Heart right ventricle (tissue), 16 donors: ENCODE measurements at regions of chr14 and their contacts with region 1.

Region 1: GRCh38 chr14:37197421-37198272 is at the start of gene MIPOL1:
- DNase-seq: peak; percentile 83 to 88
- ATAC-seq: peak; percentile 99 to 100 (median 99)
- H3K4me3 ChIP-seq: peak within 1 kb of the TSS; percentile 41 to 80 (median 64)
- H3K27ac ChIP-seq: peak within 1 kb of the TSS; percentile 31 to 91 (median 84)
- H3K4me1 ChIP-seq: peaks cover 0 to 15% (median 7%) of the 10 kb centered on the region in 9 donors
- H3K27me3 ChIP-seq: peaks cover 0 to 4% (median 0%) of the 10 kb centered on the region in 7 donors
- CTCF ChIP-seq: peak in 7 of 9 donors; percentile 8 to 60 (median 35)
- total RNA-seq, gene MIPOL1: 4.2 to 9.2 (median 5.6) TPM

Region 2: DNA sequence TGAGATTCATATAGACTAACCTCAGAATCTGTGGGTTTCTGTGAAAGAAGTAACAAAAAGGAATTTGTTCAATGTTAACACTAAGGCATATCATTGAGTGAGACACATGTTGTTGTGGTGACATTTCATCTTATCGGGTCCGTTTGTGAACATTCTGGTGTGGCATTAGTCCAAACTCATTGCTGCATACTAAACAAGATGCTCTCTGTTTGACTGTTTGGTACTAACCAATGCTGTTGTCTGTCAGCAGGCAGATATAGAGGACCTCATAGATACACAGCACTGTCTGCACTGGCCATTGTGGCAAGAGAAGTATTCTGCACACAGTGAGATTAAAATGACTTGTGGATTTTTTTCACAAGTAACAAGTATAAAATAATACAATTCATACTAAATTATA is 66.4 kb before region 1 on chr14:
- intact Hi-C with region 1: loop called in 1 of 10 experiments (anchors 2 kb)
- DNase-seq: no peak
- ATAC-seq: peak in 1 of 8 donors; percentile 31
- H3K4me3 ChIP-seq: no peak overlapping the region
- H3K27ac ChIP-seq: no peak overlapping the region
- H3K4me1 ChIP-seq: no peaks in the 10 kb centered on the region
- H3K27me3 ChIP-seq: no peaks in the 10 kb centered on the region
- CTCF ChIP-seq: no peak

Region 3: GRCh38 chr14:37172024-37172869 is 25.4 kb before region 1 on chr14 and contains the start of gene SLC25A21:
- intact Hi-C with region 1: loop called in 1 of 10 experiments (anchors 1 kb)
- DNase-seq: peak; percentile 69
- ATAC-seq: peak; percentile 94 to 98 (median 97)
- H3K4me3 ChIP-seq: peak within 1 kb of the TSS; percentile 50 to 81 (median 70)
- H3K27ac ChIP-seq: peak within 1 kb of the TSS; percentile 18 to 92 (median 84)
- H3K4me1 ChIP-seq: peaks cover 0 to 28% (median 8%) of the 10 kb centered on the region in 9 donors
- H3K27me3 ChIP-seq: peaks cover 0 to 27% (median 0%) of the 10 kb centered on the region in 7 donors
- CTCF ChIP-seq: peak in 5 of 9 donors; percentile 10 to 31 (median 26)
- total RNA-seq, gene SLC25A21: 0.08 to 1.3 (median 0.44) TPM

Region 4: GRCh38 chr14:37278636-37279538 is 81.2 kb after region 1 on chr14:
- intact Hi-C with region 1: no loop called
- DNase-seq: no peak
- ATAC-seq: no peak
- H3K4me3 ChIP-seq: no peak overlapping the region
- H3K27ac ChIP-seq: no peak overlapping the region
- H3K4me1 ChIP-seq: no peaks in the 10 kb centered on the region
- H3K27me3 ChIP-seq: no peaks in the 10 kb centered on the region
- CTCF ChIP-seq: no peak